ENCODE measurements at regions of chr9 and their contacts with region 1.

Region 1: GRCh38 chr9:70639853-70640814 is 225.7 kb upstream of the KLF9 start:
- DNase-seq: peak in 2 of 9 donors; percentile 14 to 34
- ATAC-seq: no peak
- H3K4me3 ChIP-seq: no peak overlapping the region
- H3K4me3 Mint-ChIP-seq: no peak overlapping the region
- H3K27ac ChIP-seq: no peak overlapping the region
- H3K27ac Mint-ChIP-seq: no peak overlapping the region
- H3K4me1 ChIP-seq: no peaks in the 10 kb centered on the region
- H3K4me1 Mint-ChIP-seq: no peaks in the 10 kb centered on the region
- H3K27me3 ChIP-seq: no peaks in the 10 kb centered on the region
- H3K27me3 Mint-ChIP-seq: peaks cover 6 to 24% (median 19%) of the 10 kb centered on the region in 5 donors

Region 2: DNA sequence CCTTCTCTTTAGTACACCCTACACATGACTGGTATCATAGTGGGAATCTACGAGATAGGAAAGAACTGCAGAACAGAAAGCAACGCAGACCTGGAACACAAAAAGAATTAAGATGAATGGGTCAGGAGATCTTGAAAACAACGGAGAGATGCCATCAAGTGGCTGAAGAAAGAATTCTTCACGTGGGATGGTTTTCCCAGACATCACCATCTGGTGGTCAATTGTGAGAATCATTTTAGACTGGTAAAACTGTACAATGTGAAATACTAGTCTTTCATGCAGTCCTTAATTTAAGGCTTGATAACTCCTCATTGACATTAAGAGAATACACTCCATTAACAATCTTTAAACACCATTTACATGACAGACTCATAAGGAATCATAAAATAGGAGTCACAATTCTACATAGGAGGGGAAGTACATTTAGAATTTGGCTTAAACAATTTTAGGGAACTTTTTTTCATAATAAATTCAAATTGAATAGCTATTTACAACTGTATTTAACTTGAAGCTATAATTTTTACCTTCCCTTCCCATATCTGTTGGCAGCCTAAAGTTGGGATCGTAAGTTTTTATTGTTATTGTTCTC is 609.7 kb after region 1 on chr9:
- CTCF ChIA-PET with region 1: interaction called, 3 read pairs
- POLR2A ChIA-PET with region 1: no interaction called
- intact Hi-C with region 1: loop called in 1 of 2 experiments (anchors 1 kb)
- DNase-seq: peak in 1 of 9 donors; percentile 7
- ATAC-seq: no peak
- H3K4me3 ChIP-seq: no peak overlapping the region
- H3K4me3 Mint-ChIP-seq: no peak overlapping the region
- H3K27ac ChIP-seq: no peak overlapping the region
- H3K27ac Mint-ChIP-seq: no peak overlapping the region
- H3K4me1 ChIP-seq: no peaks in the 10 kb centered on the region
- H3K4me1 Mint-ChIP-seq: no peaks in the 10 kb centered on the region
- H3K27me3 ChIP-seq: peaks cover 0 to under 1% of the 10 kb centered on the region in 2 donors
- H3K27me3 Mint-ChIP-seq: peaks cover 1 to 14% (median 9%) of the 10 kb centered on the region in 5 donors

Measured in naive thymus-derived CD4-positive, alpha-beta T cell (primary cell).